Activated B cell treated with CpG ODN at 0.5 μM for 24 hours (primary cell): ENCODE measurements at regions of chr2 and their contacts with region 1.

Region 1: DNA sequence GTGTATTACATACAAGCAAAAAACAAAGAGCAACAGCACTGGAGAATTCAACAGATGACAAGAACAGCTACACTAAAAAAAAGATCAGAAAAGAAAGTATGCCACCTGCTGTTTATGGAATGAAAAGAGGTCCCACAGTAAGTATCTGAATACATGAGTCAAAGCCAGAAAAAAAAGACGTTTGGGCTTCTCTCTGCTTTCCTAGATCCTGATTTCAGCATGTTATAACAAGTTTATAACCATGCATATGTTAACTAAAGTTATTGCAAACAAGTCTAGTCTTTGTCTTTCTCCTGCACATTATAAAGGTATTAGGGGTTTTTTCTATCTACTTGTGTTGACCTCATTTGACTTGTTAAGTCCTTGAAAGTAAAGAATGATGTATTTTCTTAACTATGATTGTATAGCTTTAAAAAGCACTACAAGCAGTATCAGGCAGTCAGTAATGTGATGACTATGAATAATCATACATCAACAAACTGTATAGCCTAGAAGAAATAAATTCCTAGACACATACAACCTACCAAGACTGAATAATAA is 108.5 kb upstream of the COL5A2 start:
- DNase-seq: no peak
- ATAC-seq: no peak
- H3K4me3 Mint-ChIP-seq: no peak overlapping the region
- H3K27ac Mint-ChIP-seq: no peak overlapping the region
- H3K4me1 Mint-ChIP-seq: no peaks in the 10 kb centered on the region
- H3K27me3 Mint-ChIP-seq: no peaks in the 10 kb centered on the region
- CTCF ChIP-seq: no peak

Region 2: GRCh38 chr2:189249171-189249570 is 38.9 kb before region 1 on chr2:
- CTCF ChIA-PET with region 1: no interaction called
- POLR2A ChIA-PET with region 1: no interaction called
- intact Hi-C with region 1: no loop called
- DNase-seq: no peak
- ATAC-seq: no peak
- H3K4me3 Mint-ChIP-seq: no peak overlapping the region
- H3K27ac Mint-ChIP-seq: no peak overlapping the region
- H3K4me1 Mint-ChIP-seq: no peaks in the 10 kb centered on the region
- H3K27me3 Mint-ChIP-seq: no peaks in the 10 kb centered on the region
- CTCF ChIP-seq: no peak

Region 3: GRCh38 chr2:189276277-189276676 is 11.8 kb before region 1 on chr2:
- CTCF ChIA-PET with region 1: no interaction called
- POLR2A ChIA-PET with region 1: no interaction called
- intact Hi-C with region 1: loop called (anchors 1 kb)
- DNase-seq: no peak
- ATAC-seq: no peak
- H3K4me3 Mint-ChIP-seq: no peak overlapping the region
- H3K27ac Mint-ChIP-seq: no peak overlapping the region
- H3K4me1 Mint-ChIP-seq: no peaks in the 10 kb centered on the region
- H3K27me3 Mint-ChIP-seq: no peaks in the 10 kb centered on the region
- CTCF ChIP-seq: no peak